PC-3 (cell line): ENCODE measurements at regions of chr20 and their contacts with region 1.

Region 1: GRCh38 chr20:63580796-63581461 is 6.9 kb upstream of the HELZ2 start:
- DNase-seq: peak; percentile 86
- ATAC-seq: peak; percentile 95
- H3K4me3 ChIP-seq: no peak overlapping the region
- H3K27ac ChIP-seq: peak overlapping the region; percentile 7; the same call in 1 of the 2 replicates
- H3K4me1 ChIP-seq: peaks cover 5% of the 10 kb centered on the region
- H3K27me3 ChIP-seq: no peaks in the 10 kb centered on the region
- CTCF ChIP-seq: peak; percentile 85

Region 2: GRCh38 chr20:63627129-63627750 is 46.3 kb after region 1 on chr20:
- CTCF ChIA-PET with region 1: interaction called, 3 read pairs
- POLR2A ChIA-PET with region 1: no interaction called
- intact Hi-C with region 1: loop called (anchors 5 kb)
- DNase-seq: peak; percentile 95
- ATAC-seq: peak; percentile 79
- H3K4me3 ChIP-seq: peak overlapping the region; percentile 93
- H3K27ac ChIP-seq: peak overlapping the region; percentile 58
- H3K4me1 ChIP-seq: peaks cover 14% of the 10 kb centered on the region
- H3K27me3 ChIP-seq: no peaks in the 10 kb centered on the region
- CTCF ChIP-seq: no peak